ENCODE measurements at regions of chr17 and their contacts with region 1.

Region 1: DNA sequence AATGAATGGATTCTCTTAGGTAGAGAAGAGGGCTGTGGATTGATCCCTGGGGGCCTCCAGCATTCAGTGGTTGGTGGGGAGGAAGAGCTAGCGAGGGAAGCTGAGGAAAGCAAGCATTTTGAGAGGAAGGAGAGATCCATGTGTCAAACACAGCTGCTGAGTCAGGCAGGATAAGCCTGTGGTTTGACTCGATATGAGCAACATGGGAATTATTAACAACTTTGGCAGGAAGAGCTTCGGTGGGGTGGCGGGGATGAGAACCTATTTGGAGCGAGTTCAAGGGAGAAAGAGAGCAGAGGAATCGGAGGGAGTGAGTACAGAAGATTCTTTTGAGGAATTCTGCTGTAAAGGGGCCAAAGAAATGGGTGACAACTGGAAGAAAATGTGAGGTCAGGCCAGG is 59.5 kb upstream of the CDC42EP4 start:
- DNase-seq: no peak
- H3K4me3 Mint-ChIP-seq: no peak overlapping the region
- H3K27ac Mint-ChIP-seq: no peak overlapping the region
- H3K4me1 Mint-ChIP-seq: no peaks in the 10 kb centered on the region
- H3K27me3 Mint-ChIP-seq: peaks cover 18% of the 10 kb centered on the region

Region 2: DNA sequence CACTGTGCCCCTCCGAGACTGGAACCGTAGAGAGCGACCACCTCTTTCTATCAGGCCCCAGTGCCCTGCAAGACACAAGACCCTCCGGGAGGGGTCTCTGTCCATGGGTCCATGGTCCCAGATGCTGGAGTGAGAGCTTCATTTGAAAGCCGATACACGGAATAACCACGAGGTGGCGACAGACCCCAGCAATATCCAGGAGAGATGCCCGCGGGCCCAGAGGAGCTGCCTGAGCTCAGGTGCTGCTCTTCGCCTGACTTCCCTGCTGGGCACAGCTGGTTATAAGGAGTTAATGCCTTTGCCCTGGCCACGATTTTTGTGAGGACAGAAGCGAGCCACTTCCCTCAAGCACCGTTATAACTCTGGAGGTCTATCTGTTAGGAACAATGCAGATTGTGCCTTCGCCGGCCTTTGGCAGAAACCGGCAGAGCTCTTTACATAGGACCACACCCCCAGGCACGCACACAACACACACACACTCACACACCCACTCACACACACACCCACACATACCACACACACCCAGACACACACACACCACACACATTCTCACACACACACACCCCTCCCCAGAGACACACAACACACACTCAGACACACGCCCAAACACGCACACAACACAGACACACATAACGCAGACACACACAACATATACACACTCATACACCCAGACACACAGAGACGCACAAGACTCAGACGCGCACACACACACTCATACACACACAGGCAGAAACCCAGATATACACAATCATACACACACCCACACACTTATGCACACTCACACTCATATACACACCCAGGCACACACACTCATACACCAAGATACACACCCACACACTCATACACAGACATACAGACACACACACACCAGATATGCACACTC is 814.1 kb before region 1 on chr17:
- CTCF ChIA-PET with region 1: interaction called, 14 read pairs
- DNase-seq: peak; percentile 82
- H3K4me3 Mint-ChIP-seq: no peak overlapping the region
- H3K27ac Mint-ChIP-seq: no peak overlapping the region
- H3K4me1 Mint-ChIP-seq: peaks cover 5% of the 10 kb centered on the region
- H3K27me3 Mint-ChIP-seq: peaks cover 7% of the 10 kb centered on the region

Region 3: DNA sequence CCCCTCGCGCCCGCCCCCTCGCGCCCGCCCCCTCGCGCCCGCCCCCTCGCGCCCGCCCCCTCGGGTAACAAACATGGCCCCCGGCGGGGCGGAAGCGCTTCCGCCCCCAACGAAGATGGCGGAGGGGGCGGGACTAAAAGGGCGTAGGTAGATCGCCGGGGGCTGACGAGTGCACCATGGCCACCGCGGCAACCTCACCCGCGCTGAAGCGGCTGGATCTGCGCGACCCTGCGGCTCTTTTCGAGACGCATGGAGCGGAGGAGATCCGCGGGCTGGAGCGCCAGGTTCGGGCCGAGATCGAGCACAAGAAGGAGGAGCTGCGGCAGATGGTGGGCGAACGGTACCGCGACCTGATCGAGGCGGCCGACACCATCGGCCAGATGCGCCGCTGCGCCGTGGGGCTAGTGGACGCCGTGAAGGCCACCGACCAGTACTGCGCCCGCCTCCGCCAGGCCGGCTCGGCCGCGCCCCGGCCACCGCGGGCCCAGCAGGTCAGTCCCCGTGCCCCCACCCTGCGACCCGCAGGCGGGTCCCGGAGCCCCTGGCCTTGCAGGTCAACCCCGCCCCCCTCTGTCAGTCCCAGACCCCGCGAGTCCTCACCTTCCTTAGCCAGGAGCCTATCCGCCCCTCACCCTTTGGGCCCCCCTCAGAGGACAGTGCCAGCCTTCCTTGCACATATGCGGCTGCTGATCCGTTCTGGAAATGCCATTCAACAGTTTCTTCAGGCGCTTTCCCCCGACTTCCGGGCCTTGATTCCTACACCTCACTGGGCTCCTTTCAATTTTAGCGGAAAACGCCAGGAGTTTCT is 178.2 kb before region 1 on chr17 and contains the start of gene COG1:
- CTCF ChIA-PET with region 1: interaction called, 34 read pairs
- DNase-seq: peak; percentile 94
- H3K4me3 Mint-ChIP-seq: peak within 1 kb of the TSS; percentile 98
- H3K27ac Mint-ChIP-seq: peak within 1 kb of the TSS; percentile 98
- H3K4me1 Mint-ChIP-seq: peaks cover 39% of the 10 kb centered on the region
- H3K27me3 Mint-ChIP-seq: no peaks in the 10 kb centered on the region

Region 4: DNA sequence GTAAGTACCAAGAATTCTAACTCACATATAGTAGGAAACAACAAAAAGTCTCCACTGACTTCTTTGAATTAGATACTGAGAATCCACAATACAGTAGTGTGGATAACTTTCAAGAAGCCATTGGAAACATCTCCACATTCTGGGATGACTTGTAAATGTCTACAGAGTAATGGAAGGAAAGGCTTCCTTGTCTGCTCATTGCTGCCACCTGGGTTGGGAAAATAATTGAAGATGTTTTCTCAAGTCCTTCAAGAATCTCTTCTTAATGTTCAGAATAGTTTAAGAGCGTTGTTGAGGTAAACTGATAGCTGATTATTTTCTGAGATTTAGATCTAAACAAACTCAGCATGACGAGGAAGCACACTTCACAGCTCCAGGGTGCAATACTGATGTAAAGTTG is 123.6 kb before region 1 on chr17:
- CTCF ChIA-PET with region 1: interaction called, 130 read pairs
- DNase-seq: no peak
- H3K4me3 Mint-ChIP-seq: no peak overlapping the region
- H3K27ac Mint-ChIP-seq: no peak overlapping the region
- H3K4me1 Mint-ChIP-seq: no peaks in the 10 kb centered on the region
- H3K27me3 Mint-ChIP-seq: no peaks in the 10 kb centered on the region

Region 5: DNA sequence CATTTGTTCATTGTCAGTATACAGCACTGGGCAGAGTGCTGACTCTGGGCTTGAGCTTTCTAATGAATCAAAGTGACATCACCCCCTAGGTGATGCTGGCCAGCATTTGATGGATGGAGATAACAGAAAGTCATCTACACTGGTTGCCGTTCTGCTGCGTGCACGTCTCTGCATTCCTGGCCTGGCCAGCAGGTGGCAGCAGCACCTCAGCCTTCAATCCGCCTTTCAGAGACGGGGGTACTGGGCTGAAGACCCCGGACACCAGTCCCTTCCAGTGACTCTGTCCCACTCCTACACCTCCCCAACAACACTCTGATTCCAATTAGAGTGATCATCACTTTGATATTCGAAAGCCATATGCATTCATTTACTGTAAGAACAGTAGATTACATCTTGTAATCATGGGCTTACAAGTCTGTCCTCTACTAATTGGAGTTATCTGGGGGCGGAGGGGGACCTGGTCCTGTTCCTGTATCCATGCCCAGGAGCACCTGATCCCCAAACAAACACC is 115.6 kb before region 1 on chr17:
- CTCF ChIA-PET with region 1: interaction called, 130 read pairs
- DNase-seq: peak; percentile 68
- H3K4me3 Mint-ChIP-seq: no peak overlapping the region
- H3K27ac Mint-ChIP-seq: no peak overlapping the region
- H3K4me1 Mint-ChIP-seq: no peaks in the 10 kb centered on the region
- H3K27me3 Mint-ChIP-seq: no peaks in the 10 kb centered on the region

Region 6: GRCh38 chr17:73342050-73342522 is 29.2 kb before region 1 on chr17:
- CTCF ChIA-PET with region 1: interaction called, 11 read pairs
- DNase-seq: no peak
- H3K4me3 Mint-ChIP-seq: no peak overlapping the region
- H3K27ac Mint-ChIP-seq: no peak overlapping the region
- H3K4me1 Mint-ChIP-seq: no peaks in the 10 kb centered on the region
- H3K27me3 Mint-ChIP-seq: peaks cover 13% of the 10 kb centered on the region

Region 7: GRCh38 chr17:73393962-73394361 is 22.7 kb after region 1 on chr17:
- CTCF ChIA-PET with region 1: no interaction called
- DNase-seq: no peak
- H3K4me3 Mint-ChIP-seq: no peak overlapping the region
- H3K27ac Mint-ChIP-seq: no peak overlapping the region
- H3K4me1 Mint-ChIP-seq: no peaks in the 10 kb centered on the region
- H3K27me3 Mint-ChIP-seq: no peaks in the 10 kb centered on the region